ENCODE measurements at regions of chr22 and their contacts with region 1.

Region 1: GRCh38 chr22:30235687-30236170 is 10.8 kb downstream of the LIF start:
- DNase-seq: no peak
- H3K4me3 Mint-ChIP-seq: no peak overlapping the region
- H3K27ac Mint-ChIP-seq: no peak overlapping the region
- H3K4me1 Mint-ChIP-seq: peaks cover 52% of the 10 kb centered on the region
- H3K27me3 Mint-ChIP-seq: no peaks in the 10 kb centered on the region

Region 2: GRCh38 chr22:30178181-30179126 is 57.3 kb before region 1 on chr22:
- CTCF ChIA-PET with region 1: interaction called, 3 read pairs
- POLR2A ChIA-PET with region 1: interaction called, 12 read pairs
- DNase-seq: peak; percentile 63
- H3K4me3 Mint-ChIP-seq: peak overlapping the region; percentile 51
- H3K27ac Mint-ChIP-seq: peak overlapping the region; percentile 94
- H3K4me1 Mint-ChIP-seq: peaks cover 83% of the 10 kb centered on the region
- H3K27me3 Mint-ChIP-seq: no peaks in the 10 kb centered on the region

Region 3: GRCh38 chr22:30245985-30246901 is 10.5 kb after region 1 on chr22 and contains the start of gene LIF:
- CTCF ChIA-PET with region 1: interaction called, 10 read pairs
- POLR2A ChIA-PET with region 1: no interaction called
- DNase-seq: peak; percentile 61
- H3K4me3 Mint-ChIP-seq: peak within 1 kb of the TSS; percentile 99
- H3K27ac Mint-ChIP-seq: peak within 1 kb of the TSS; percentile 99
- H3K4me1 Mint-ChIP-seq: peaks cover 80% of the 10 kb centered on the region
- H3K27me3 Mint-ChIP-seq: no peaks in the 10 kb centered on the region
- total RNA-seq, gene LIF: 102 to 103 TPM

Measured in activated CD4-positive, alpha-beta T cell treated with anti-CD3 and anti-CD28 coated beads, Interleukin-2, amount 10 ng/mL, durations not matched to agents 7 days and 5 days (primary cell).